ENCODE measurements at regions of chr5 and their contacts with region 1.

Region 1: GRCh38 chr5:152560512-152561137 is 155.5 kb upstream of the NMUR2 start:
- DNase-seq: peak; percentile 64
- H3K27ac ChIP-seq: no peak overlapping the region
- CTCF ChIP-seq: peak; percentile 72

Region 2: GRCh38 chr5:153147891-153148623 is 587.4 kb after region 1 on chr5:
- CTCF ChIA-PET with region 1: interaction called, 18 read pairs
- POLR2A ChIA-PET with region 1: no interaction called
- DNase-seq: peak; percentile 63
- H3K27ac ChIP-seq: no peak overlapping the region
- CTCF ChIP-seq: peak; percentile 82

Measured in RWPE1 (cell line).